Activated CD8-positive, alpha-beta T cell treated with anti-CD3 and anti-CD28 coated beads for 36 hours (primary cell): ENCODE measurements at regions of chr1 and their contacts with region 1.

Region 1: GRCh38 chr1:183567584-183567983 is 22.7 kb downstream of the NCF2 start:
- DNase-seq: peak; percentile 42
- ATAC-seq: peak; percentile 47
- H3K4me3 Mint-ChIP-seq: no peak overlapping the region
- H3K27ac Mint-ChIP-seq: no peak overlapping the region
- H3K4me1 Mint-ChIP-seq: peaks cover 23% of the 10 kb centered on the region
- H3K27me3 Mint-ChIP-seq: no peaks in the 10 kb centered on the region
- CTCF ChIP-seq: no peak

Region 2: GRCh38 chr1:183105449-183105848 is 462.1 kb before region 1 on chr1:
- CTCF ChIA-PET with region 1: no interaction called
- POLR2A ChIA-PET with region 1: no interaction called
- intact Hi-C with region 1: no loop called
- DNase-seq: no peak
- ATAC-seq: no peak
- H3K4me3 Mint-ChIP-seq: no peak overlapping the region
- H3K27ac Mint-ChIP-seq: no peak overlapping the region
- H3K4me1 Mint-ChIP-seq: no peaks in the 10 kb centered on the region
- H3K27me3 Mint-ChIP-seq: peaks cover 6% of the 10 kb centered on the region
- CTCF ChIP-seq: no peak

Region 3: DNA sequence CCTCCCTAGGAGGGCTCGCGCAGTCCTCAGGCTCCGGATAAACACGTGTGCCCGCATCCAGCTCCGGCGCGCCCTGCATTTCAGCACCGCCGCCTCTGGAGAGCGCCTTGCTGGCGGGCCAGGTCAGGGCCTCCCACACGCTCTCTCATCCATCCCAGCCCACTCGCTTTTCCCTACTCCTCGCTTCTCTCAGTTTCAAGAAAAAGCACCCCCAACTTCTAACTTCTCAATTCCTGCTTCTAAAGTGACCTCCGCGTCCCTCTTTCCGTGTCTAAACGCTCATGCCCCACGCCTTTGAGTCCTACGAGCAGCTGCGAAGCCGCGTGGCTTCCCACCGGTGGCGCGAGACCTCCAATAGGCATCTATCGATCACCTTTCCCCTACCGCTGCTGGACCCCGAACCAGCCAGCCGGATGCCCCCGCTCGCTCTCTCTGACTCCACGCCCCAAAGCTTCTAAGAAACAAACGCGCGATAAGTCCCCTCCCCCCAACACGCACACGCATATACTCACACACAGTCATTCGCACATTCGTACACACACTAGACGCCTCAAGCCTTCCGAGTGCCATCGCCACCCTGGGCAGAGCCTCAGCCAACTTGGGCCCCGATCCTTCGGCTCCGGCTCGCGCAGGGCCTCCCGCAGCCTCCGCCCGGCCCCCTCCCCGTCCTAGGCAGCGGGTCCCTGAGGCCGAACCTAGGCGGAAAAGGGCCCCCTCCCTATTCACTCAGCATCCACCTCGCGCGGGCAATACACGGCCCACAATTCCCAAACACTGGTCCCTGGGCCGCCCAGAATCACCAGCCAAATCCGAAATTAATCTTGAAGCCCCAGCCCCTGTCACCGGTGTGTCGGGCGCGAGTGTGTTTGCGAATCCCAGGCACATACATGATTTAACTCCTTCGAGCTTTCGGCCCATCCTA is 150.5 kb before region 1 on chr1:
- CTCF ChIA-PET with region 1: no interaction called
- POLR2A ChIA-PET with region 1: no interaction called
- intact Hi-C with region 1: no loop called
- DNase-seq: peak; percentile 60
- ATAC-seq: peak; percentile 70
- H3K4me3 Mint-ChIP-seq: peak overlapping the region; percentile 30
- H3K27ac Mint-ChIP-seq: no peak overlapping the region
- H3K4me1 Mint-ChIP-seq: peaks cover 23% of the 10 kb centered on the region
- H3K27me3 Mint-ChIP-seq: peaks cover 48% of the 10 kb centered on the region
- CTCF ChIP-seq: no peak

Region 4: DNA sequence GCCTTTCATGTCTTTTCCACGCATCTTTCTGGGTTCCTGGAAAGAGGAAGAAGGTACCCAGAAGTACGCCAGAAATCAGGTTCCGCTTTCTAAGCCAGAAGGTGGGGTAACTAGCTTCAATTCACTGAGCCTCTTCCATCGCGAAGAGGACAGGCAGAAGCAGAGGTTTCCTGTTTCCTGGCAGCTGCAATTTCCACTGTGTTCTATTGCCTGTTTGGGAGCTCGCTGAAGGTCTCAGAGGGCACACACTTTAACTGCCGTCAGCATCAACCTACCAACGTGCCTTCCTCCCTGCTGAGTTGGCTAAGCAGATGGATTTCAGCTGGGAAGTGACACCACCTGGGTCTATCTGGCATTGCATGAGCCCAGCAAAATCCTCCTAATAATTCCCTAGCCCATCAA is 12.7 kb after region 1 on chr1:
- CTCF ChIA-PET with region 1: interaction called, 13 read pairs
- POLR2A ChIA-PET with region 1: interaction called, 6 read pairs
- intact Hi-C with region 1: no loop called
- DNase-seq: peak; percentile 40
- ATAC-seq: peak; percentile 80
- H3K4me3 Mint-ChIP-seq: peak overlapping the region; percentile 45
- H3K27ac Mint-ChIP-seq: peak overlapping the region; percentile 76
- H3K4me1 Mint-ChIP-seq: peaks cover 17% of the 10 kb centered on the region
- H3K27me3 Mint-ChIP-seq: no peaks in the 10 kb centered on the region
- CTCF ChIP-seq: no peak